B cell (primary cell): ENCODE measurements at regions of chr21 and their contacts with region 1.

Region 1: GRCh38 chr21:34801519-34802132 is 132.8 kb downstream of the CLIC6 start:
- DNase-seq: peak; percentile 55
- ATAC-seq: peak; percentile 70
- H3K4me3 ChIP-seq: no peak overlapping the region
- H3K4me3 Mint-ChIP-seq: no peak overlapping the region
- H3K27ac ChIP-seq: peak overlapping the region in 1 of 2 donors; percentile 25
- H3K27ac Mint-ChIP-seq: no peak overlapping the region
- H3K4me1 ChIP-seq: no peaks in the 10 kb centered on the region
- H3K4me1 Mint-ChIP-seq: peaks cover 20% of the 10 kb centered on the region
- H3K27me3 ChIP-seq: no peaks in the 10 kb centered on the region
- H3K27me3 Mint-ChIP-seq: no peaks in the 10 kb centered on the region
- CTCF ChIP-seq: peak; percentile 68

Region 2: DNA sequence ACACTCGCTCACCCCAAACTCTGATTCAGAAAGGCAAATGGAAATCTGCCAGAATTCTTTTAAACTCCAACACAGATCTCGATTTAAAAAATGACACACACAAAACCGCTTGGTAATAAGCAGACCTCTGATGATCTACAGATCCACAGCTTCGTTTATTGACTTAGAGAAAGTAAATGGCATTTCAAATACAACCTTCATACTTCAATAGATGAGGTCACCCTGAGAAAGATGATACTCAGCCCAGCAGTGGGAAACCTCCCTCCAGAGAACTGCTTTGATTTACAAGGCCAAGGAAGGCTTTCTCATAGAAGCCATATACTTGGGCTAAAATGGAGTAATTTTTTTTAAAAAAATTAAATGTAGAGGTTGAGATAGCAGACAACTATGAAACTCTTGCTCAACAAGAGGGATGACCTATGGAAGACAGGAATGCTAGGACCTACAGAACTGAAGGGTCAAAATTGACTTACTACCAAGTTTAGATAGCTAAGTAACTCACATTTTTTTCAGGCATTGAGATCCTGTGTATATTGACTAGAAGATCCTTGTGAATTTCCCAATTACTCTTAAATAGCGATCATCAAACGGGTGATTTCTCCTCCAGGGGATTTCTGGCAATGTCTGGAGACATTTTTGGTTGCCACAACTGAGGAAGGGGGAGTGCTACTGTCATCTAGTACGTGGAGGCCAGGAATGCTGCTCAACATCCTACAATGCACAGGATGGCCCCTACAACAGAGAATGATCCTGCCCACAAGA is 11.1 kb after region 1 on chr21:
- CTCF ChIA-PET with region 1: interaction called, 11 read pairs
- POLR2A ChIA-PET with region 1: no interaction called
- intact Hi-C with region 1: no loop called
- DNase-seq: no peak
- ATAC-seq: no peak
- H3K4me3 ChIP-seq: no peak overlapping the region
- H3K4me3 Mint-ChIP-seq: no peak overlapping the region
- H3K27ac ChIP-seq: no peak overlapping the region
- H3K27ac Mint-ChIP-seq: no peak overlapping the region
- H3K4me1 ChIP-seq: no peaks in the 10 kb centered on the region
- H3K4me1 Mint-ChIP-seq: peaks cover 13% of the 10 kb centered on the region
- H3K27me3 ChIP-seq: no peaks in the 10 kb centered on the region
- H3K27me3 Mint-ChIP-seq: no peaks in the 10 kb centered on the region
- CTCF ChIP-seq: no peak

Region 3: GRCh38 chr21:34857874-34858273 is 56.2 kb after region 1 on chr21:
- CTCF ChIA-PET with region 1: no interaction called
- POLR2A ChIA-PET with region 1: no interaction called
- intact Hi-C with region 1: no loop called
- DNase-seq: no peak
- ATAC-seq: no peak
- H3K4me3 ChIP-seq: no peak overlapping the region
- H3K4me3 Mint-ChIP-seq: peak overlapping the region; percentile 65
- H3K27ac ChIP-seq: peak overlapping the region; percentile 18 to 65
- H3K27ac Mint-ChIP-seq: peak overlapping the region; percentile 74
- H3K4me1 ChIP-seq: peaks cover 31% of the 10 kb centered on the region in 2 donors
- H3K4me1 Mint-ChIP-seq: peaks cover 40% of the 10 kb centered on the region
- H3K27me3 ChIP-seq: no peaks in the 10 kb centered on the region
- H3K27me3 Mint-ChIP-seq: no peaks in the 10 kb centered on the region
- CTCF ChIP-seq: peak; percentile 9